Right ventricle myocardium inferior (tissue), 1 donor: ENCODE measurements at regions of chr1 and their contacts with region 1.

Region 1: GRCh38 chr1:116168277-116169097 is 57.3 kb downstream of the MAB21L3 start:
- DNase-seq: peak; percentile 89
- ATAC-seq: peak; percentile 61

Region 2: DNA sequence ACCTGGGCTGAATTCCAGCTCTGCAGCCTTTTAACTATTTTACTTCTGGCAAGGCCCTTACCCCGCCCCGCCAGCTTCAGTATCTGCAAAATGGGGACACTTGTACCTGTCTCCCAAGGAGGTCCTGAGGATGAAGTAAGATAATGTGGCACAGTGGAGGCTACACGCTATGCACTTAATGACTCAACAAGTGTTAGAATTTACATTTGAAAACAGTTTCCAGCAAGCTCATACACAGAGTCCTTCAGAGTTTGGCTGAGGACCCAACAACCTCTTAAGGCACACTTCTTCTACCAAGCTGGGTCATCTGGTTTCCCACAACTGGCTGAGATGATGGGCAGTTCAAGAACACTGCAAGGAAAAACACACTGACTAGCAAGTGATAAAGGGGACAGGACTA is 222.4 kb before region 1 on chr1:
- intact Hi-C with region 1: no loop called
- DNase-seq: no peak
- ATAC-seq: no peak

Region 3: GRCh38 chr1:116372587-116373444 is 204.3 kb after region 1 on chr1 and contains the start of gene ATP1A1:
- intact Hi-C with region 1: loop called (anchors 5 kb)
- DNase-seq: peak; percentile 99
- ATAC-seq: peak; percentile 87
- total RNA-seq, gene ATP1A1: 298 TPM